ENCODE measurements at regions of chr5 and their contacts with region 1.

Region 1: GRCh38 chr5:80255732-80256479 is at the start of gene SERINC5:
- DNase-seq: peak; percentile 87 to 88
- ATAC-seq: peak; percentile 89 to 95 (median 93)
- H3K4me3 ChIP-seq: peak within 1 kb of the TSS; percentile 70 to 97 (median 80)
- H3K27ac ChIP-seq: peak within 1 kb of the TSS; percentile 82 to 100 (median 94)
- H3K4me1 ChIP-seq: peaks cover 11 to 53% (median 36%) of the 10 kb centered on the region in 9 donors
- H3K27me3 ChIP-seq: no peaks in the 10 kb centered on the region
- CTCF ChIP-seq: no peak
- total RNA-seq, gene SERINC5: 13.2 to 21.9 (median 15.8) TPM

Region 2: DNA sequence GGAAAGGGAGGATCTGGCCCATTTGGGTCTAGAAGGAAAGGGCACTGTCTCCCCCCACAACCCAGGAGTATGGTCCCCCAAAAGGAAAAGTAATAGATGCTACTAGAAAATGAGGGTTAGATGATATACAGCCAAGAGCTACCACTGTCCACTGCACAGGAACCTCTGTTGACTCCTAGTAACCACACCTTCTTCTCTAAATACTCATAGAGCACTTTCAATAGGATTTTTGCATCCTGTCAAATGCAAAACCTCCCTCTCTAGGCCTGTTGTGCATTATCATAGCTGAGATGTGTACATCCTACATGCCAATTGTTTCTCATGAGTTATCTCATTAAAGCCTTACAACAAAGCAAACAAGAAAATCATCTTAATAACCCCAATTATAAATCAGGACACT is 153.9 kb before region 1 on chr5:
- intact Hi-C with region 1: loop called in 2 of 10 experiments (anchors 5 kb)
- DNase-seq: no peak
- ATAC-seq: no peak
- H3K4me3 ChIP-seq: no peak overlapping the region
- H3K27ac ChIP-seq: no peak overlapping the region
- H3K4me1 ChIP-seq: peaks cover 0 to 18% (median 4%) of the 10 kb centered on the region in 9 donors
- H3K27me3 ChIP-seq: no peaks in the 10 kb centered on the region
- CTCF ChIP-seq: no peak

Region 3: GRCh38 chr5:80141147-80141671 is 114.7 kb before region 1 on chr5:
- intact Hi-C with region 1: loop called in 5 of 10 experiments (anchors 2 to 5 kb)
- DNase-seq: peak; percentile 82 to 89
- ATAC-seq: peak; percentile 93 to 97 (median 96)
- H3K4me3 ChIP-seq: no peak overlapping the region
- H3K27ac ChIP-seq: peak overlapping the region; percentile 62 to 89 (median 86)
- H3K4me1 ChIP-seq: peaks cover 0 to 79% (median 23%) of the 10 kb centered on the region in 9 donors
- H3K27me3 ChIP-seq: no peaks in the 10 kb centered on the region
- CTCF ChIP-seq: peak in 3 of 9 donors; percentile 9 to 20 (median 15)

Region 4: DNA sequence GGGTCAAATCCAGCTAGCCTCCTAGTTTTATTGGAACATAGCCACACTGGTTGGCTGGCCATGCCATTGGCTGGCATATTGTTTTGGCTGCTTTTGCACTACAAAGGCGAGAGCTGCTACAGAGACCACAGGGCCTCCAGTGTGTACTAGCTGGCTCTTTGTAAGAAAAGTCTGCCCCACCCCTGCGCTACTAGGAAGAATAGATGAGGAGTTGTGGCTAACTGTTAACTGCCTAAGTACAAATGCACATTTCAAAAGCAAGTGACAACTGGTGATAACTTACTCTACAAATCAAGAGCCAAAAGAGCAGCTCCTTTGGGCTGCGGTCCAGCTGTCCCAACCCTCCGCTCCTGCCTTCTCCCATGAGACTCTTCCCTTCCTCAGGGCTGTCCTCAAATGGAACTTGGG is 63.9 kb before region 1 on chr5:
- intact Hi-C with region 1: loop called in 6 of 10 experiments (anchors 1 to 10 kb)
- DNase-seq: peak; percentile 58 to 65
- ATAC-seq: peak; percentile 46 to 71 (median 66)
- H3K4me3 ChIP-seq: peak overlapping the region in 3 of 10 donors; percentile 6 to 16 (median 16)
- H3K27ac ChIP-seq: peak overlapping the region; percentile 57 to 87 (median 78)
- H3K4me1 ChIP-seq: peaks cover 29 to 75% (median 62%) of the 10 kb centered on the region in 9 donors
- H3K27me3 ChIP-seq: no peaks in the 10 kb centered on the region
- CTCF ChIP-seq: no peak

Region 5: GRCh38 chr5:80216753-80217596 is 38.9 kb before region 1 on chr5:
- intact Hi-C with region 1: loop called in 1 of 10 experiments (anchors 5 kb)
- DNase-seq: peak; percentile 68 to 84
- ATAC-seq: peak; percentile 81 to 97 (median 93)
- H3K4me3 ChIP-seq: peak overlapping the region in 3 of 10 donors; percentile 0 to 31 (median 29)
- H3K27ac ChIP-seq: peak overlapping the region in 9 of 10 donors; percentile 14 to 87 (median 70)
- H3K4me1 ChIP-seq: peaks cover 2 to 64% (median 48%) of the 10 kb centered on the region in 9 donors
- H3K27me3 ChIP-seq: no peaks in the 10 kb centered on the region
- CTCF ChIP-seq: no peak

Measured in heart right ventricle (tissue), 16 donors.